Left colon (tissue), 2 donors: ENCODE measurements at regions of chr5 and their contacts with region 1.

Region 1: DNA sequence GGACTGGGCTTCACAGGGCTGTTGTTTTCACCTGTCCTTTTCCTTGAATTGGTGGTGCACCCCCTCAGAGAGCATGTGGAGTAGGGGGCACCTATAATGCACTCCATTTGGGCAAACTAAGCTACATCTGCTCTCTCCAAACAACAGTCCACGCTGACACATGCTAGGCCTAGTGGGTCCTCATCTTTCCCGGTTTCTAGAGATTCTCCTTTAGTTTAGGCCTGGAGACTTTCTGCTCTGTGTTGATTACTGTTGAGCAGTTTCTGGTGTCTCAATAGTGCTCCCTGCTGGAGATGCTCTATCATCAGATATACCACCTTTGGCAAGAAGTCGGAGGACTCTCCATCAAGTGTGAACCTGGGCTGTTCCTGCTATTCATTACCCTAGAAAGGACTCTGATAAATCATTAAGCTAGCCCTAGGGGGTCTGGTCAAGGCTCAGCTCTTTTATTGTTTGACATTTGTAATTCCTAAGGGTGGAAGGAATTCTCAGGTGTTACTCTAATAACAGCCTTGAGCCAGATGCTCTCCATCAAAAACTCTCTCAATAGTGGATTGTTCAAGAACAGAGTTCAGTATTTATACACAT is 64.0 kb upstream of the FYB1 start:
- DNase-seq: no peak
- ATAC-seq: peak; percentile 98

Region 2: GRCh38 chr5:38961691-38962090 is 321.6 kb before region 1 on chr5:
- intact Hi-C with region 1: no loop called
- DNase-seq: no peak
- ATAC-seq: peak; percentile 50

Region 3: GRCh38 chr5:39217365-39218281 is 65.7 kb before region 1 on chr5:
- intact Hi-C with region 1: loop called in 1 of 2 experiments (anchors 5 kb)
- DNase-seq: peak; percentile 70 to 80
- ATAC-seq: peak; percentile 83

Region 4: DNA sequence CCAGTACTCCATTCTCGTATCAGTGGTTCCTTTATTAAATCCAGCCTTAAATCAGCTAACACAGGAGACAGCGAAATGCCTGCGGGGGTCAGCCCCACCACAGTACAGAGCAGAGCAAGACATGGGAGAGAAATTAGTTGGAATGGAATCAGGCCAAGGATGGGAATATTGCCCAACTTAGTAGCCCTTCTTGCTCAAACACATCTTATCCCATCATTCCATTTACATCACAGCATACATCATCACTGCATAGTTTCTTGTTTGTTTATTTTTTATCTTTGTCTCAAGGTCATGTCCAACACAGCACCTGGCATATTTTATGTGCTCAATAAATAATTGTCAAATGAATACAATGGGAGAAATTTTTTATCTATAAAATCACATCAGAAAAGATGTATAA is 175.8 kb after region 1 on chr5:
- intact Hi-C with region 1: no loop called
- DNase-seq: no peak
- ATAC-seq: no peak